ENCODE measurements at regions of chr6 and their contacts with region 1.

Region 1: DNA sequence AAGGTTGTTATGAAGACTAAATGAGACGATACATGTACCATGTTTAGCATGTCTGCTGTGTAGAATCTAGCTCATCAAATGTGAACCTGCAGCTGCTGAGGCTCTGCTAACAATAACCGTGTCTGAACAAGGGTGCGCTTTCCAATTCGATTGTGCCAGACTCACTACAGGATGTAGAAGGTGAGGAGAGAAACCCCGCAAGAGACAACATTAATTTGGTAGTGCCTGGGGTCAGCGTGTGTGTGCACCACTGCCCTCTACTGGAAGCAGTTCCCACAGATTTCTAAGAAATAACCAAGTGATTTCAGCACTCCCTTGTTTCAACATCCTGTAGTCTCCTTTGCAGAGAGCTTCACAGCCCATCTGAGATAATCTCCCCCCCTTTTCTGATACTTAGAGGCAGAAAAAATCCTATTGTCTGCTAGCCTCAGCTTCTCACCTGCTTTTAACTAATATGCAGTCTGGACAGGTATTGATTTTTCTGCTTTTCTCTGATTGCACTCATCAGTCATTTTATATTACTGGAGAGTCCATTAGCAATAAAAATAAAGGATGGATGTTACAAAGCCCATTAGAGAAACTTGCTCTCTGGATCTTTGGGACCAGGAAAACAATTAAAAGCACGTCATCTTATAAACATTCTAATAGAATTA is 96.7 kb upstream of the BACH2 start:
- DNase-seq: peak; percentile 61
- H3K4me3 ChIP-seq: no peak overlapping the region; a peak in 1 of 4 replicates
- H3K27ac ChIP-seq: no peak overlapping the region
- H3K4me1 ChIP-seq: peaks cover 0 to 14% of the 10 kb centered on the region in 2 experiments; a peak in 1 of 4 replicates
- H3K27me3 ChIP-seq: peaks cover 9% of the 10 kb centered on the region; the same call in 1 of the 2 replicates
- CTCF ChIP-seq: peak; percentile 89
- EP300 ChIP-seq: no peak
- RAD21 ChIP-seq: peak; percentile 85

Region 2: GRCh38 chr6:89970609-89971337 is 422.6 kb before region 1 on chr6:
- CTCF ChIA-PET with region 1: interaction called, 34 read pairs
- POLR2A ChIA-PET with region 1: no interaction called
- DNase-seq: peak; percentile 67
- H3K4me3 ChIP-seq: no peak overlapping the region
- H3K27ac ChIP-seq: peak overlapping the region in 1 of 2 experiments; percentile 58; a peak in 2 of 4 replicates
- H3K4me1 ChIP-seq: peaks cover 0 to 24% of the 10 kb centered on the region in 2 experiments; a peak in 2 of 4 replicates
- H3K27me3 ChIP-seq: 0 out of 2 replicates have a peak, but pooled peaks cover under 1% of the 10 kb centered on the region
- CTCF ChIP-seq: peak; percentile 79
- EP300 ChIP-seq: no peak
- RAD21 ChIP-seq: peak; percentile 95

Region 3: GRCh38 chr6:90343581-90343980 is 49.8 kb before region 1 on chr6:
- CTCF ChIA-PET with region 1: interaction called, 16 read pairs
- POLR2A ChIA-PET with region 1: no interaction called
- DNase-seq: peak; percentile 20
- H3K4me3 ChIP-seq: no peak overlapping the region
- H3K27ac ChIP-seq: no peak overlapping the region
- H3K4me1 ChIP-seq: peaks cover 0 to 3% of the 10 kb centered on the region in 2 experiments; a peak in 2 of 4 replicates
- H3K27me3 ChIP-seq: no peaks in the 10 kb centered on the region; the same call in 1 of the 2 replicates
- CTCF ChIP-seq: peak; percentile 27; the same call in 1 of the 2 replicates
- EP300 ChIP-seq: no peak
- RAD21 ChIP-seq: no peak

Region 4: DNA sequence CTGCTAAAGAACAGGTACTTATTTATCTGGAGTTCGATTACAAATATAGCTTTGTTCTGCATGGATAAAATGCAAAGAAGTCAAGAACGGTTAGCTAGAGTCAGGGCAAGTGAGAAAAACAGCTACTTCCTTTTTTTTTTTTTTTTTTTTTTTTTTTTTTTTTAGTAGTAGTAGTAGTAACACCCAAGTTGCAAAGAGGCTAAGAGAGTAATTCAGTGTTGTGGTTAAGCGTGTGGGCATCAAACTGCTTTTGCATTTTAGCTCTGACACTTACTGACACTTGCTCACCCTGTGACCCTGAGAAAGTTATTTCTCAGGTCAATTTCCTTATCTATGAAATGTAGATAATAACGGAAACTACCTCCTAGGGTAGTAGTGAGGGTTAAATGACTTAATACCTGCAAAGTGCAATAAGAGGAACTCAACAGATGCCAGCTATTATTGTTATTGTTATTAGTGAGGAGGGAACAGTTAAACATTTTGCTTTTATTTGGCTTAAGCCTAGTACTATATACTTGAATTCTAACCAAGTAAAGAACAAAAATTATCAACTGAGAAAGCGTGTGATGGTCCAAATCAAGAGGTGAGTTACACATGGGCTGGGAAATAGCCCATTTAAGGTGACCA is 10.0 kb before region 1 on chr6:
- CTCF ChIA-PET with region 1: interaction called, 20 read pairs
- POLR2A ChIA-PET with region 1: no interaction called
- DNase-seq: no peak
- H3K4me3 ChIP-seq: no peak overlapping the region
- H3K27ac ChIP-seq: no peak overlapping the region
- H3K4me1 ChIP-seq: no peaks in the 10 kb centered on the region; a peak in 1 of 4 replicates
- H3K27me3 ChIP-seq: no peaks in the 10 kb centered on the region; the same call in 1 of the 2 replicates
- CTCF ChIP-seq: no peak
- EP300 ChIP-seq: no peak
- RAD21 ChIP-seq: no peak

Region 5: GRCh38 chr6:90425161-90425641 is 31.8 kb after region 1 on chr6:
- CTCF ChIA-PET with region 1: interaction called, 35 read pairs
- POLR2A ChIA-PET with region 1: no interaction called
- DNase-seq: no peak
- H3K4me3 ChIP-seq: no peak overlapping the region
- H3K27ac ChIP-seq: no peak overlapping the region
- H3K4me1 ChIP-seq: no peaks in the 10 kb centered on the region; a peak in 1 of 4 replicates
- H3K27me3 ChIP-seq: no peaks in the 10 kb centered on the region
- CTCF ChIP-seq: no peak
- EP300 ChIP-seq: no peak
- RAD21 ChIP-seq: no peak

Region 6: DNA sequence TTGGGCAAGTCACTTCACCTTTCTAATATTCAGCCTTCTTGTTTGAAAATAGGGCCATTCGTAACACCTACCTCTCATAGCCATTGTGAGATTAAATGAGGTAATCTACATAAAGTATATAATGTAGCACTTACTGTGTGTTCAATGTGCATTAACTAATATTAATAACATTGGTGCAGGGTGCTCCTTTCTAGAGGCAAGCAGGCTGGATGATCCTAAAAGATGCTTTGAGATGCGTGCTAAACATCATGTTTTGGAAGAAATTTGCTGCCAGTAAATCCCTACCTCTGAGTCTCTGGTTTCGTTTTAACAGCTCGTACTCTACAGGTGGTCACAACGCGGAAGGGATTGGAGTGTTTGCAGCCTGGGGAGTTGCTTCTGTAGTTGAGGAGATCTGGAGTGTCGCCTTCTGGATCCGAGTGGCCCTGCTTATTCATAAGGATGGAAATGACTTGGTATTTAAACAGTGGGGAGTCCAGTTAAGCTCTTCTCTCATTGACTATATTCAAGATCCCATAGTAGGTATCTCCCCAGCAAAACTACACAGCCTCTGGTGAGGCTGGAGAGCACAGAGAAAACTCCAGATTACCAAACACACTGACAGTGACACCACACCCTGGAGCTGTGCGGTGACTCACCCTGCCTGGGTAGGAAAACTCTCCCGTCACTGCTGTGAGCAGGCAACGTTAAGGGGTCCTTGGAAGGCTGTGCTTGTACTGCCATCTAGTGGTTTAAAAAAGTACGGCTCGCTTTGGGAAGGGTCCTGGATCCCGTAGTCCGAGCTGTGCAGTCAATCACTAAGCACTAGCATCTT is 85.6 kb after region 1 on chr6:
- CTCF ChIA-PET with region 1: interaction called, 20 read pairs
- POLR2A ChIA-PET with region 1: no interaction called
- DNase-seq: peak; percentile 79
- H3K4me3 ChIP-seq: no peak overlapping the region
- H3K27ac ChIP-seq: no peak overlapping the region
- H3K4me1 ChIP-seq: peaks cover 5 to 7% of the 10 kb centered on the region in 2 experiments; a peak in 3 of 4 replicates
- H3K27me3 ChIP-seq: no peaks in the 10 kb centered on the region
- CTCF ChIP-seq: peak; percentile 89
- EP300 ChIP-seq: no peak
- RAD21 ChIP-seq: peak; percentile 100

Region 7: DNA sequence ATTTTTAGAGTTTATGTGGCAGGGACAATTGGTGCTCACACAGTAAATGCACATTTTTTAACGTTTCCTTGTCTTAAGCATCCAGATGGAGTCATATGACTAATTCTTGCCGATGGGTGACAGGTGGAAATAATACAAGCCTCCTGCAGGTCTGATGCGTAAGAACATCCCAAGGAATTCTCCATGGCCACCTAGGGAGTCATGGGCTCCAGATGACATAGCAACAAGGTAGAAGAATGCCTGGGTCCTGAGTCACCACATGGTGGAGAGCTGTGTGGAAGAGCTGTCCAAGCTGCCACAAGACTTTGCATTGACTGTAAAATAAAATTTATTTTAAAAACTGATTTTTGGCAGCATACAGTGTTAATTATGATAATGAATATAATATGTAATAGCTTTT is 270.5 kb after region 1 on chr6:
- CTCF ChIA-PET with region 1: no interaction called
- POLR2A ChIA-PET with region 1: no interaction called
- DNase-seq: no peak
- H3K4me3 ChIP-seq: no peak overlapping the region
- H3K27ac ChIP-seq: no peak overlapping the region
- H3K4me1 ChIP-seq: no peaks in the 10 kb centered on the region
- H3K27me3 ChIP-seq: no peaks in the 10 kb centered on the region
- CTCF ChIP-seq: no peak
- EP300 ChIP-seq: no peak
- RAD21 ChIP-seq: no peak

Measured in SK-N-SH (cell line).